Spleen (tissue), 13 donors: ENCODE measurements at regions of chr16 and their contacts with region 1.

Region 1: DNA sequence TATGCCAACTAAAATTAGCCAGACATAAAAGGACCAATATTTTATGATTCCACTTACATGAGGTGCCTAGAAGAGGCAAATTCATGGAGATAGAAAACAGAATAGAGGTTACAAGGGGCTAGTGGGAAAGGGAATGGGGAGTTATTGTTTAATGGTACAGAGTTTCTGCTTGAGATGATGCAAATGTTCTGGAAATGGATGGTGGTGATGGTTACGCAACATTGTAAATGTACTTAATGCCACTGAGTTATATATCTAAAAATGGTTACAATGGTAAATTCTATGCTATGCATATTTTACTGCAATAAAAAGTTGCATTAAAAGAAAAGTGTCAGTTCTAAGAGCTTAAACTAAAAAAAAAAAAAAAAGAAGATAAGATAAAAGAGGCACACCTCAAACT is 17.9 kb downstream of the MT1X start:
- DNase-seq: no peak
- H3K4me3 ChIP-seq: no peak overlapping the region
- H3K27ac ChIP-seq: no peak overlapping the region
- H3K4me1 ChIP-seq: peaks cover 0 to 13% (median 8%) of the 10 kb centered on the region in 6 donors
- H3K27me3 ChIP-seq: peaks cover 0 to 5% (median 0%) of the 10 kb centered on the region in 7 donors
- CTCF ChIP-seq: no peak
- POLR2A ChIP-seq: no peak

Region 2: DNA sequence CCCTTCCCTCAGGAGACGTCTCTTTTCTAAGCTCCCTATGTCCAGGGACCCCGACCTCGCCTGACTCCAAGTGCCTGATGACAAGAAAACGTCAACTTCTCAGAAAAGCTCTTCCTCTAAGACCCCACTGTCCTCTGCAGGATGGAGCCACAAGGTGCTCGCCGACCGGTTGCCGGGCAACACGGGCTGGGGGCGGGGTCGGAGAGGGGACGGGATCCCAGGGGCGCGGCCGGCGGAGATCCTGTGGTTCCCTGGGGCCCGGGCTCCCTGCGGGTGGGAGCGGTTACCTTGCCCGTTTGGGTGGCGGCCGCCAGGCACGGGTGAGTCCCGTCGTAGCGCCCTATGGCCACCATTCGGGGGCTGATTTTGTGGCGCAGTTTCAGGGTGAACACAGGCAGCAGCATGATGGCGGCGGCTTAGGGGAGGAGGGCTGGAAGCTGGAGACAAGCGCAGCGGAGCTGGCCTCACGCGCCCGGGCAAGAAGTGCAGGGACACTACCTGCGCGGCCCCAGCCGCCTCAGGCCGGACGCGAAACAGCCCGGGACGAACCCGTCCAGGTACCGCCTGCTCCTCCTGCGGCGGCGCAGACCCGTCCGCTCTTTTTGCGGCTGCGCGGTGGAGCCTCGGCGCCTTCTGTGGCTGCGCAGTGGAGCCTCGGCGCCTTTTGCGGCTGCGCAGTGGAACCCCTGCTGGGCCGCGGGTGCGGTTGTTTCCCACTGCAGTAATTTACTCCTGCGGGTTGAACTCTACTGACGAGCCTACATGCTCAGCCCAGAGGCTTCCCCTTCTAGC is 180.5 kb before region 1 on chr16 and contains the start of gene BBS2:
- intact Hi-C with region 1: loop called (anchors 5 kb)
- DNase-seq: peak; percentile 97
- H3K4me3 ChIP-seq: peak within 1 kb of the TSS; percentile 64 to 100 (median 94)
- H3K27ac ChIP-seq: peak within 1 kb of the TSS; percentile 83 to 95 (median 88)
- H3K4me1 ChIP-seq: peaks cover 13 to 58% (median 37%) of the 10 kb centered on the region in 6 donors
- H3K27me3 ChIP-seq: no peaks in the 10 kb centered on the region
- CTCF ChIP-seq: peak in 6 of 11 experiments; percentile 16 to 43 (median 20)
- POLR2A ChIP-seq: peak in 1 of 3 donors; percentile 65
- total RNA-seq, gene BBS2: 29.1 to 70.3 (median 52.8) TPM

Region 3: DNA sequence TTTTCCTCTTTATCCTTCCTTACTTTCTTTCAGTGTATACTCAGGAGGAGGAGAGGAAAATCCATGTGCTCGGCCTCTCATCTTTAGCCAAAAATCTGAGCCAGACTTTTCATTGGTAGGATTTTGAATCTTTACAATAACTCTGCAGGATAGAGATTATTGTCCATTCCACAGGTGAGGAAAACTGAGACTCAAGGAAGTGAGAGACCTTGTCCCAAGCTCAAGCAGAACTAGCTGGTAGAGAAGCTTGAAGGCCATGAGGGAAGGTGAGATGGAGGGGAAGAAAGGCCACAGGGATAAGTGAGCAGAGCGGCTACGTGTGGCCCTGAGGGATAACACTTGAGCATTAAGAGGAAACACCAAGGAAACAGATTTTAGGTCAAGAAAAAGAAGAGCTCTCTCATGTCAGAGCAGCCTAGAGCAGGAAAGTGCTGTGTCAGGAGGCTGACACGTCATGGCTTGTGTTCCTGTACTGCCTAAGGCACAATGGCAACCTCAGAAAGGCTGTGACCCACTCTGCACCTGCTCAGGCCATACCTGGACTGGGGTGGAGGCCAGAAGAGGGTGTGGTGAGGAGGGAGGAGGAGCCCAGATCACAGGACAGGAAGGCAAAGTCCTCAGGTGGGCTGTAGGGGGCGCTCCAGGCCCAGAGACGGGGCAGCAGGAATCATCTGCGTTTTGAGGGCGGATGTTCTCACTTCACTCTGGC is 123.5 kb before region 1 on chr16:
- intact Hi-C with region 1: loop called (anchors 5 kb)
- DNase-seq: peak; percentile 92
- H3K4me3 ChIP-seq: no peak overlapping the region
- H3K27ac ChIP-seq: no peak overlapping the region
- H3K4me1 ChIP-seq: peaks cover 0 to 7% (median 0%) of the 10 kb centered on the region in 6 donors
- H3K27me3 ChIP-seq: no peaks in the 10 kb centered on the region
- CTCF ChIP-seq: peak; percentile 72 to 91 (median 88)
- POLR2A ChIP-seq: no peak

Region 4: DNA sequence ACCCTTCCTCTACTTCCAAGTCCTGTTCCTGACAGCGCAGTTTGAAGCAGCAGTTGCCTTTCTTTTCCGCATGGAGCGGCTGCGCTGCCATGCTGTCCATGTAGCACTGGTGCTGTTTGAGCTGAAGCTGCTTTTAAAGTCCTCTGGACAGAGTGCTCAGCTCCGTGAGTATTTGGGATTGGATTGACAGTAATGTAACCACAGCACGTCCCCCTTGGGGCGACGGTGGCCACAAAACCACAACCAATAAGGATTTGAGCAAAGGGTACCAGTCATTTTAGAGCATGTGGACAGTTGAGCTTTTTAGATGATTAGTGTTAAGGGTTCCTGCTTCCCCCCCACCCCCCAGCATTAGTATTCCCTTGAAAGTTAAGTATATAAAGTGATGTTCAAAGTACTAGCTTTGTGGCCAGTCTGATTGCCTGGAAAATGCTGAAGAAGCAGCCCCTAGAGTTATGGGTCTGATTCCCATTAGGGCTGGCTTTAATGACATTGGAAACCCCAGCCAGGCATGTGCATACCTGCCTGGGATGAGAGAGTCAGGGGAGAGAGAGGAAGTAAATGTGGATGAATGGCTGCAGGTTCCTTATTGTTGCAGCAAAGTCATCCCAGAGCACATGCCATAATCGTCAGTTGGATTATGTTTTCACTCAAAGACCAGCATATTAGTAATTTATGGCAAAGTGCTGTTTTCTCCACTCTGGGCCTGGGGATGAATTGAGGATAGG is 133.2 kb after region 1 on chr16:
- intact Hi-C with region 1: no loop called
- DNase-seq: no peak
- H3K4me3 ChIP-seq: no peak overlapping the region
- H3K27ac ChIP-seq: no peak overlapping the region
- H3K4me1 ChIP-seq: no peaks in the 10 kb centered on the region
- H3K27me3 ChIP-seq: no peaks in the 10 kb centered on the region
- CTCF ChIP-seq: no peak
- POLR2A ChIP-seq: no peak